Lower leg skin (tissue), 4 donors: ENCODE measurements at regions of chr6 and their contacts with region 1.

Region 1: GRCh38 chr6:109187399-109188114 is 92.2 kb downstream of the CEP57L1 start:
- DNase-seq: peak in 1 of 2 donors; percentile 34
- H3K4me3 ChIP-seq: no peak overlapping the region
- CTCF ChIP-seq: peak in 1 of 3 donors; percentile 65
- POLR2A ChIP-seq: no peak

Region 2: GRCh38 chr6:109382576-109383437 is 195.2 kb after region 1 on chr6:
- intact Hi-C with region 1: loop called (anchors 10 kb)
- DNase-seq: peak; percentile 91 to 98
- H3K4me3 ChIP-seq: peak overlapping the region; percentile 92
- CTCF ChIP-seq: no peak
- POLR2A ChIP-seq: no peak